Cardiac septum (tissue), 1 donor: ENCODE measurements at regions of chrX and their contacts with region 1.

Region 1: GRCh38 chrX:153667956-153668396 is 5.6 kb downstream of the PNCK start:
- DNase-seq: no peak

Region 2: DNA sequence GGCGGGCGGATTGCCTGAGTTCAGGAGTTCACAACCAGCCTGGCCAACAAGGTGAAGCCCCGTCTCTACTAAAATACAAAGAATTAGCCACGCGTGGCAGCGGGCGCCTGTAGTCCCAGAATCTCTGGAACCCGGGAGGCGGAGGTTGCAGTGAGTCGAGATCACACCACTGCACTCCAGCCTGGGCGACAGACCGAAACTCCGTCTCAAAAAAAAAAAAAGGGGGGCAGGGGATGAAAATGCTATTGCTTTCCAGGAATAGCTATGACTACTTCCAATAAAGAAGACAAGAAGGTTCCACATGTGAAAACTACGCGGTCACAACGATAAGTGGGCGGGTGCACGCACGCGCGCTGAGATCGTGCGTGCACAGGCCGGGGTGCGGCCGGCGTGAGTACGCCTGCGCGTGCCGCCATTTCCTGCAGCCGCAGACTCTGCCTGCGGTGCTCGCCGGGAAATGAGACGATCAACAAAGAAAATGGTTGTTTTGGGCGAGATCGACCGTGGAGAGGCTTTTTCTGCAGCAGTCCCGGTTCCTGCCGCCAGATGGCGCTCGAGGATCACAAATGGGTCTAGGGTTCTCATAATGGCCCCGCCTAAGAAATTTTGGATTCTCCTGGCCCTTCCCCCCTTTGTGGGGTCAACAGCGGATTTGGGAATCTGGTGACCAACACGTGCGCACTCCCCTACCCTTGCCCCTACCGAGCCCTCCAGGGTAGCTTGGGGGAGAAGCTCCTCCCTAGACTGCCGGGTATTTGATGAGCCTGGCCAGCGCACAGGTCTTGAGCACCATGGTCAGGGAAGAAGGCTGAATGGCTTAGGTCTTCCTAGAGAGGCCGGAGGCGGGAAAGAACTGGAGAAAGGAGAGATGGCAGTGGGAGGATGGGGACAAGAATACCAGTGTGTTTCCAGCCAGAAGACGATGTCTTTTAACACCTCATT is 709.2 kb before region 1 on chrX:
- intact Hi-C with region 1: loop called (anchors 2 kb)
- DNase-seq: peak; percentile 92

Region 3: DNA sequence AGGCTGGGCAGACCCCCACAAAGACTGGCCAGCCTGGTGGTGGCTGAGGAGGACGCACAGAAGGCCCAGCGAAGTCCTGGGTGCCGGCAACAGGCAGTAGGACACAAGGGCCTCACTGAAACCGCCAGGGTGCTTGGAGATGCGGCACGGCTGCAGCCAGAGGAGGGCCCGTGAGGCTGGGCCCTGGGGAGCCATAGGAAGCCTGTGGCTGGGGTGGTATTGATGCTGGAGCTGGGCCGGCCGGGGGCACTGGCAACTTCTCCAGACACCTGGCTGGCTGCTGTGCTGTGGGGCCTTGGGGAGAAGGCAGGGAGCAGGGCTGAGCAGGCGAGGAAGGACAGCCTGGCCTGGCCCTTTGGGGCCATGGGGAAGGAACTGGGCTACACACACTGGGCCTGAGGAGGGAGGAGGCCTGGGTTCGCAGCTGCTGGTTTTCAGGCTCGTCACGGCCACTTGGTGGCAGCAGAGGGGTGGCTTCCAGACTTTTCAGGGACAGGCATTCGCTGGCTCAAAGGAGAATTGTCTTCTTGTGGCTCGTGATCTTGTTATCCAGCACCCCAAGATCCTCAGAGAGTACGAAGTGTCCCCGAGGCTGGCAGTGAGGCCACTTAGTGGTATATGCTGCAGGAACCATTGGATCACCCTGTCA is 113.3 kb before region 1 on chrX:
- intact Hi-C with region 1: loop called (anchors 5 kb)
- DNase-seq: no peak

Region 4: GRCh38 chrX:153609917-153610428 is 58.0 kb before region 1 on chrX:
- intact Hi-C with region 1: loop called (anchors 5 kb)
- DNase-seq: no peak

Region 5: GRCh38 chrX:153708415-153708814 is 40.4 kb after region 1 on chrX:
- intact Hi-C with region 1: no loop called
- DNase-seq: no peak